ENCODE measurements at regions of chr6 and their contacts with region 1.

Region 1: GRCh38 chr6:116127771-116128493 is 2.0 kb upstream of the COL10A1 start:
- DNase-seq: no peak
- ATAC-seq: no peak
- H3K4me3 Mint-ChIP-seq: no peak overlapping the region
- H3K27ac Mint-ChIP-seq: no peak overlapping the region
- H3K4me1 Mint-ChIP-seq: no peaks in the 10 kb centered on the region
- H3K27me3 Mint-ChIP-seq: no peaks in the 10 kb centered on the region
- CTCF ChIP-seq: no peak

Region 2: DNA sequence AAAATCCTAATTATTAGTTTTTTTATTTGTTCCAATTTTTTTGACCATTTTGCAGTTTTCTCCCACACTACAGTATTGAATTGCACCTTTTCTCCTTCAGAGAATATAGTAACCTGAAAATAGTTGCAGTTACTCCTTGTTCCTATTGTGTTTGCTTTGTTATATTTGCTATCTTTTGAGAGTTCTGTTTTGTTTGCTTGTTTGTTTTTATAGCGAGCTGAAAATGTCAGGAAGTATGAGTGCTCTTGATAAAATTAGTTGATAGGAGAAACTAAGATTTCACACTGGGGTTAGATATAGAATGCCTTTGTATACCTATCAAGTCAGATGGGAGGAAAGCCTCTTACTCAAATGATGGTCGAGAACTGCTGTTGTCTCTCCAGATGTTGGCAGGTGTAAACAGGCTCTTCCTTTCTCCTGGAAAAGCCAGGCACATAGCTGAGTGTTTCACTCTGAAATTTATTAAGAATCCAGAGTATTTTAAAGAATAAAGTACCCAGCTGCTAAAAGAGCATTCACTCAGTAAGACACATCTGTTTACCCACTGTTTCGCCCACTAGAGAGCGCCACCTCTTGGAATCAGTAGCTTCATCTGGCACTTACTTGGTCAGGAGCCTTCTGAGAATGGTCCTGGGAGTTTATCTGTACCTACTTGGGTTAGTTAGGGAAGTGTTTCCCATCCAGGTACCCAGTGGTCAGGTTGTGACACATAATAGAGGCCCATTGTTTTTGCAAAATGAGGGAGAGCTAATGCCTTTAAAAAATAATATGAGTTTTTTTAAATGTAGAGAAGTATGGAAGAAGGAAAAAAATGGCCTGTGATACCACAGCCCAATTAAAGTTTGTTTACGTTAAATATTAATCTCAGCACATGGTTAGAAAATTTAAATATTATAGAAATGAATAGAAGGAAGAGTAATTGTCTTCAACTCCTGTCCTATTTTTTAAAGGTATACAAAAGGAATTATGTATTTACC is 16.1 kb before region 1 on chr6:
- CTCF ChIA-PET with region 1: interaction called, 16 read pairs
- POLR2A ChIA-PET with region 1: no interaction called
- intact Hi-C with region 1: no loop called
- DNase-seq: peak; percentile 69
- ATAC-seq: peak; percentile 66
- H3K4me3 Mint-ChIP-seq: no peak overlapping the region
- H3K27ac Mint-ChIP-seq: no peak overlapping the region
- H3K4me1 Mint-ChIP-seq: no peaks in the 10 kb centered on the region
- H3K27me3 Mint-ChIP-seq: no peaks in the 10 kb centered on the region
- CTCF ChIP-seq: peak; percentile 57

Measured in activated CD8-positive, alpha-beta T cell treated with anti-CD3 and anti-CD28 coated beads for 36 hours (primary cell).